Activated CD8-positive, alpha-beta memory T cell treated with anti-CD3 and anti-CD28 coated beads, Interleukin-2, amount 10 ng/mL, durations not matched to agents 7 days and 5 days (primary cell): ENCODE measurements at regions of chr7 and their contacts with region 1.

Region 1: DNA sequence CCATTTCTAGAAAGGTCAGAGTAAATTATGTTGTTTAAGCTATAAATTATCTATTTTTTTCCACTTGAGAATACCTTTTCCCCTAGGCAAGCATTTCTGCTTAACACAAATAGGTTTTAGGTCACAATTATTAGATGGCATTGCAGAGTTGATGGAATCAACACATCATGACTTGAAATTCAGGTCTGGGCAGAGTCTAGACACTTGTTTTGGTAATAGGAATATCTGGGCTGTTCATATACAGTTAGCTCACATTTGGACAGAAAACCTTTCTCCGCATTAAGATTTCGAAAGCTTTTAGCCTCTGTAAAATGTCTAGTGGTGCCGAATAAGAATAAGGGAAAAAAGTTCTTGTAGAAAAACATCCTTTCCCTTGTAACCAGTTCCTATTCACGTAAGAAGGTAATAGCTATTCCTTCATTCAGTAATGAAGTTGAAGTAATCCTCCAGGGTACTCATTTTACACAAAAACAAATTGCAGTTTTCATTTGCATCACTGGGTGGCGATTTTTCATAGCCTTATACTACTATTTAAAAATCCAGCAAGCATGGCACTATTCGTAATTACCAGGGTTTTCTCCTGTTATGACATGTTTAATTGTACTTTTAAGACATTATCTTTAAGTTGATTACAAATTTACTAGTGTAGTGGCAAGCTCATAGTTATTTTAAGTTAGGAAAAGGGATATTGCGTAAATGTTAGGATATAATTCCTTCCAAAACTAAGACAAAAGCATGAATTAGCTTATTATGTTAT is 37.0 kb downstream of the RPA3 start:
- DNase-seq: peak; percentile 59
- ATAC-seq: peak; percentile 86
- H3K4me3 Mint-ChIP-seq: no peak overlapping the region
- H3K27ac Mint-ChIP-seq: no peak overlapping the region
- H3K4me1 Mint-ChIP-seq: peaks cover 27% of the 10 kb centered on the region
- H3K27me3 Mint-ChIP-seq: no peaks in the 10 kb centered on the region

Region 2: GRCh38 chr7:7478569-7478968 is 202.8 kb before region 1 on chr7:
- CTCF ChIA-PET with region 1: no interaction called
- DNase-seq: no peak
- ATAC-seq: no peak
- H3K4me3 Mint-ChIP-seq: no peak overlapping the region
- H3K27ac Mint-ChIP-seq: no peak overlapping the region
- H3K4me1 Mint-ChIP-seq: no peaks in the 10 kb centered on the region
- H3K27me3 Mint-ChIP-seq: peaks cover 2% of the 10 kb centered on the region

Region 3: DNA sequence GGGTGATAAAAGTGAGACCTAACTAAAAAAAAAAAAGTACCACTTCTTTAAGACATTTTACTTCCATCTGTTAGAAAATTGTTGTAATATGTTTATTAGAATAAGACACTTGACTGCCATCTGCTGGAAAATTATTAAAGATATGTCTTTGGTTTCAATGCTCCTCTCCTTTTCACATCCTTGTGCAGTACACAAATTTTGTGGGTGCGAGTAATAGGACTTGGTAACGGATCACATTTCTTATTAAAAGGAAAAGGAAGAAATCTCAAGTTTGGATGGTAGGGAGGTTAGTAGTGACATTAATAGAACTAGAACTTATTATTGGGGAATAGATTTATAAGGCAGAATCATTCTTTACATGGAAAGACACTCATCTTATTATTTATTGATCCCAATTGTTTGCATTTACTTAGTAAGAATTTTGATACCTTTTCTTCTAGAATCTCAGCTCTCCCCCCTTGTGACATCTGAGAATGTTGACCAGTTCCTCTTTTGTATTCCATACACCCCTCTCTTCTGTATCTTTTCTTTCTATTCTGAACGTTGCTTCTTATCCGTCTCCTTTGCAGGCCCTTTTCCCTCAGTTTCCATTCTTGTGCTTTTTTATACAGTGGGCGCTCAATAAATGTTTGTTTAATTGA is 80.1 kb after region 1 on chr7:
- CTCF ChIA-PET with region 1: interaction called, 32 read pairs
- DNase-seq: no peak
- ATAC-seq: no peak
- H3K4me3 Mint-ChIP-seq: peak overlapping the region; percentile 90
- H3K27ac Mint-ChIP-seq: peak overlapping the region; percentile 95
- H3K4me1 Mint-ChIP-seq: peaks cover 42% of the 10 kb centered on the region
- H3K27me3 Mint-ChIP-seq: no peaks in the 10 kb centered on the region

Region 4: GRCh38 chr7:7968543-7969305 is 287.4 kb after region 1 on chr7 and contains the start of gene GLCCI1:
- CTCF ChIA-PET with region 1: interaction called, 10 read pairs
- DNase-seq: peak; percentile 98
- ATAC-seq: peak; percentile 92
- H3K4me3 Mint-ChIP-seq: peak within 1 kb of the TSS; percentile 89
- H3K27ac Mint-ChIP-seq: peak within 1 kb of the TSS; percentile 89
- H3K4me1 Mint-ChIP-seq: peaks cover 19% of the 10 kb centered on the region
- H3K27me3 Mint-ChIP-seq: no peaks in the 10 kb centered on the region
- total RNA-seq, gene GLCCI1: 37.7 to 43.6 TPM

Region 5: GRCh38 chr7:8035647-8036518 is 354.5 kb after region 1 on chr7:
- CTCF ChIA-PET with region 1: interaction called, 18 read pairs
- DNase-seq: no peak
- ATAC-seq: peak; percentile 81
- H3K4me3 Mint-ChIP-seq: no peak overlapping the region
- H3K27ac Mint-ChIP-seq: peak overlapping the region; percentile 30
- H3K4me1 Mint-ChIP-seq: peaks cover 18% of the 10 kb centered on the region
- H3K27me3 Mint-ChIP-seq: no peaks in the 10 kb centered on the region

Region 6: GRCh38 chr7:8190119-8190895 is 508.9 kb after region 1 on chr7:
- CTCF ChIA-PET with region 1: interaction called, 20 read pairs
- DNase-seq: peak; percentile 79
- ATAC-seq: peak; percentile 87
- H3K4me3 Mint-ChIP-seq: no peak overlapping the region
- H3K27ac Mint-ChIP-seq: peak overlapping the region; percentile 45
- H3K4me1 Mint-ChIP-seq: peaks cover 31% of the 10 kb centered on the region
- H3K27me3 Mint-ChIP-seq: peaks cover 2% of the 10 kb centered on the region

Region 7: DNA sequence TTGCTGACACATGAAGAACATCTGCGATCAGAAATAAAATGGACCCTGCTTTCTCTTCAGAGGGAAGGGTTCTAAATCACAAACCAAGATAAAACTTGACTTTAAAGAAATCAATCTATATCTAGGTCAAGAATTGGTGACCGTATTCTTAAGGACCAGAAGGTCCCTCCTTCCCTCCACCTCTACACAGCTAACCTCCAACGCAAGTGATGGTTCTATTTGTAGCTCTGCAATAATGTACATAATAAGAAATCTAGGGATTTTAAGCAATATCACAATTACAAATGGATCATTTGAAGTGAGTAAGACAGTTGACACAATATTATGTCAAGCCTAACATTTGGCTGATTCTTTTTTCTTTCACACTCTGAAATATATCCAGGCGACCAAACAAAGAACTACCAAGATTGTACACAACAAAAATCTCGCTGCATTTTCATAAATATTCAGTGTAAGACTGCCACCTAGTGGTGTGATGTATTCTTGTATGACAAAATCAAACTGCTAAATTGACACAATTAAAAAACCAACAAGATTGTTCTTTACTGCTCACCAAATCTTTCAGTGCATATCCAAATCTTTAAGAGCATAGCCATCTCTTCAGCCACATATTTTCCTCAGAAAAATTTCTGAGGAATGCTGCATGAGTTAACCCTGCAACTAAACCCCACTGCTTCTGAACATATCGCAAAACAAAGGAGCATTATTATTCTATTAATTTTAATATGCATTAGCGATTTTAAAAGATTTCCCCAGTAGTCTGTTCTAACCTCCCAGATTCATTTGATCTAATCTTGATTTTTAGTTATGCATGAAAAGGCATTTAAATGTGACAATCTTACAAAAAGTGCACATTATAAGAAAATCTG is 536.1 kb after region 1 on chr7:
- CTCF ChIA-PET with region 1: interaction called, 34 read pairs
- DNase-seq: no peak
- ATAC-seq: peak; percentile 75
- H3K4me3 Mint-ChIP-seq: no peak overlapping the region
- H3K27ac Mint-ChIP-seq: no peak overlapping the region
- H3K4me1 Mint-ChIP-seq: peaks cover 6% of the 10 kb centered on the region
- H3K27me3 Mint-ChIP-seq: no peaks in the 10 kb centered on the region

Region 8: GRCh38 chr7:8295638-8296361 is 614.4 kb after region 1 on chr7:
- CTCF ChIA-PET with region 1: interaction called, 11 read pairs
- DNase-seq: peak; percentile 46
- ATAC-seq: peak; percentile 93
- H3K4me3 Mint-ChIP-seq: no peak overlapping the region
- H3K27ac Mint-ChIP-seq: no peak overlapping the region
- H3K4me1 Mint-ChIP-seq: peaks cover 4% of the 10 kb centered on the region
- H3K27me3 Mint-ChIP-seq: peaks cover 23% of the 10 kb centered on the region